GM12878 (cell line): ENCODE measurements at regions of chr22 and their contacts with region 1.

Region 1: DNA sequence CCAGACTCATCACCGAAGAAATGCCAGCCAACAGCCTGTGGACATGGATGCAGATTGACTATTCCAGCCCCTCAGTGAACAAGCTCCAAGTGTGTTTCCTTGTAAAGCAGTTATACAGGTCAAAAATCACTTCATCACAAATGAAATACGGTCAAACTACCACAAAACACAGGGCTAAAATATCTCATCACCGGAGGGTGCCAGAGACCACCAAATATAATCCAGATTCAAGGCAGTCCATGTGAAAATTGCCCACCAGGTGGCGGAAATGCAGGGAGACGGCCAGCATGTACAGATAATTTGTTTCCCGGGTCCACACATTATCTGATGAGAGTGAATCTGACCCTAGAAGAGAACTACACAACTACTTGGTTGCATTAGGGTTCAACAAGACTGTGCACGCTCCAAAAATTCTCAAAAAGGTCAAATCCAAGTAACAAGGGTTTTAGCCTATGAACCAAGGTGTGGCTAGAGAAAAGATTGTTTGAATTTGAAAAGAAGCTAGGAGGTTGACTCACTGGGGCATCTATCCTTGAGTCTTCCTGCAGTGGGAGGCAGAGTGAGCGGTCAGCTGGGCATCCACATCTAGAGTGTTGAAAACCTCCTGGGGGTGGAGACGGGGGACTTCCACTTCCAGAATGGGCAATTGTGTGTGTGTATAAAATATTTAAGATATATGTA is 71.7 kb downstream of the IGLL5 start:
- DNase-seq: peak; percentile 56
- ATAC-seq: peak; percentile 66
- H3K4me3 ChIP-seq: no peak overlapping the region
- H3K27ac ChIP-seq: no peak overlapping the region
- H3K4me1 ChIP-seq: peaks cover 11% of the 10 kb centered on the region
- H3K27me3 ChIP-seq: no peaks in the 10 kb centered on the region
- CTCF ChIP-seq: peak; percentile 81 to 100 (median 95); a peak in 5 of 6 replicates
- EP300 ChIP-seq: no peak
- POLR2A ChIP-seq: no peak
- RAD21 ChIP-seq: peak; percentile 100

Region 2: GRCh38 chr22:21972293-21972779 is 987.0 kb before region 1 on chr22:
- CTCF ChIA-PET with region 1: interaction called, 42 read pairs
- POLR2A ChIA-PET with region 1: no interaction called
- RAD21 ChIA-PET with region 1: interaction called, 9 read pairs
- SMC1A ChIA-PET with region 1: interaction called, 9 read pairs
- in situ Hi-C with region 1: no loop called
- intact Hi-C with region 1: loop called (anchors 5 kb)
- DNase-seq: no peak
- ATAC-seq: peak; percentile 92
- H3K4me3 ChIP-seq: no peak overlapping the region
- H3K27ac ChIP-seq: no peak overlapping the region
- H3K4me1 ChIP-seq: no peaks in the 10 kb centered on the region; the same call in 1 of the 2 replicates
- H3K27me3 ChIP-seq: no peaks in the 10 kb centered on the region
- CTCF ChIP-seq: peak; percentile 70 to 95 (median 94)
- EP300 ChIP-seq: no peak
- POLR2A ChIP-seq: no peak
- RAD21 ChIP-seq: peak; percentile 75

Region 3: DNA sequence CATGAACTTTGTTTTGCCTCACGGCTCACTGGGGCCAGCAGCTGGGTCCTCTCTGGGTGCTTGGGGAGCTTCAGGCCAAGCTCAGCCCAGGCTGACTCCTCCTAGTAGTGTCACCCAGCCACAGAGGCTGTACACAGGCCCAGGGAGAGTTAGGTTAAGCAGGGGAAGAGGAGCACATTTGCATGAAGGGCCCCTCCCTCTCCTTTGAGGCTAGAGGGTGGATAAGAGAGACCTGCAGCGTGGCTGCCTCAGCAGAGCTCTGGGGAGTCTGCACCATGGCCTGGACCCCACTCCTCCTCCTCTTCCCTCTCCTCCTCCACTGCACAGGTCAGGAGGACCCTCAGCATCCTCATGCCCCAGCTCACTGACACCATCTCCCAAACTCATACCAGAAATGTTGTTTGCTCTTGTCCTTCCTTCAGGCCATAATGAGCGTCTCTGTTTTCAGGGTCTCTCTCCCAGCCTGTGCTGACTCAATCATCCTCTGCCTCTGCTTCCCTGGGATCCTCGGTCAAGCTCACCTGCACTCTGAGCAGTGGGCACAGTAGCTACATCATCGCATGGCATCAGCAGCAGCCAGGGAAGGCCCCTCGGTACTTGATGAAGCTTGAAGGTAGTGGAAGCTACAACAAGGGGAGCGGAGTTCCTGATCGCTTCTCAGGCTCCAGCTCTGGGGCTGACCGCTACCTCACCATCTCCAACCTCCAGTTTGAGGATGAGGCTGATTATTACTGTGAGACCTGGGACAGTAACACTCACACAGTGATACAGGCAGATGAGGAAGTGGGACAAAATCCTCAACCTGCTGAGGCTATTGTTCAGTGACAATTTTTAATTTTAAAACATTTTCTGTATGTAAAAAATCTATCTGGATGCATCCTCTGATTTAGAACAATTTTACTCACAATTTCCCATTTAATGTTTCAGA is 797.1 kb before region 1 on chr22:
- CTCF ChIA-PET with region 1: interaction called, 75 read pairs
- POLR2A ChIA-PET with region 1: no interaction called
- RAD21 ChIA-PET with region 1: interaction called, 39 read pairs
- SMC1A ChIA-PET with region 1: interaction called, 38 read pairs
- in situ Hi-C with region 1: loop called (anchors 10 kb)
- intact Hi-C with region 1: no loop called
- DNase-seq: peak; percentile 42
- ATAC-seq: peak; percentile 92
- H3K4me3 ChIP-seq: peak overlapping the region; percentile 30; the same call in 1 of the 2 replicates
- H3K27ac ChIP-seq: no peak overlapping the region; the same call in 1 of the 2 replicates
- H3K4me1 ChIP-seq: peaks cover 19% of the 10 kb centered on the region
- H3K27me3 ChIP-seq: no peaks in the 10 kb centered on the region
- CTCF ChIP-seq: no peak
- EP300 ChIP-seq: no peak
- POLR2A ChIP-seq: peak; percentile 86
- RAD21 ChIP-seq: no peak

Region 4: GRCh38 chr22:22802339-22802970 is 156.8 kb before region 1 on chr22:
- CTCF ChIA-PET with region 1: interaction called, 323 read pairs
- POLR2A ChIA-PET with region 1: interaction called, 3 read pairs
- RAD21 ChIA-PET with region 1: interaction called, 184 read pairs
- SMC1A ChIA-PET with region 1: interaction called, 220 read pairs
- in situ Hi-C with region 1: loop called (anchors 5 kb)
- intact Hi-C with region 1: no loop called
- DNase-seq: no peak
- ATAC-seq: peak; percentile 54
- H3K4me3 ChIP-seq: no peak overlapping the region
- H3K27ac ChIP-seq: no peak overlapping the region
- H3K4me1 ChIP-seq: no peaks in the 10 kb centered on the region
- H3K27me3 ChIP-seq: no peaks in the 10 kb centered on the region
- CTCF ChIP-seq: peak; percentile 19 to 39 (median 34); a peak in 4 of 6 replicates
- EP300 ChIP-seq: no peak
- POLR2A ChIP-seq: no peak
- RAD21 ChIP-seq: no peak

Region 5: DNA sequence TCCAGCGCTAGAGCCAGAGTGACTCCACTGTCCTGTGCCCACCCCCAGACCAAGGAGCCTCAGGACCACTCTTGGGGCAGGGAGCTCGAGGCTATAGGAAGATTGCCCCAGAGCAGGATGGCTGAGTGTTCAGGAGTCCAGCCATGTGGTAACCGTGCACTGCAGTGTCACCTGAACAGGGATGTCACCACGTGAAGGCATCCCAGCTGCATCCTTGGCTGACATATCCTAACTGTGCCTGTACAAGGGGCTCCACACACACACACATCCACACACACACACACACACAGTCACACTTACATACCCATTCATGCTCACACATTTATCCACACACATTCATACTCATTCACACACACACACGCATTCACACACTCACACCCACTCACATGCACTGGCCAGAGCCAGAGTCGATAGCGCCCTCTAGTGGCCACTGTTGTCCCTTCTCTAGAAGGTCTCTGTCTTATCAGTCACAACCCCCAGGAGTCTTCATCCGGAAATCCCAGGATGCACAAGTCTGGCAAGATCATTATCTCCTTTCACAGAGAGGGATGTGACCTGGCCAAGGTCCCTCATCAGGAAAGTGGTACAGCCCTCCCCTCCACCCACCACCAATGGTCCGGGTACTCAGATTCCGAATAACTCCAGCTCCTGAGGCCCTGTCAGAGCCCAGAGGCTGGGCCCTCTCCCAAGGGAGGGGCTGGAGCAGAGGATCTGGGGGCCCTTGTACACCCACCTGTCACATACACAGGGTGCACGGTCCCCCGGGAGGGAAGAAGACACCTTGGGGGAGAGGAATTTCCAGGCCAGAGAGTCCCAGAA is 16.6 kb before region 1 on chr22:
- CTCF ChIA-PET with region 1: interaction called, 397 read pairs
- POLR2A ChIA-PET with region 1: interaction called, 21 read pairs
- RAD21 ChIA-PET with region 1: interaction called, 87 read pairs
- SMC1A ChIA-PET with region 1: interaction called, 93 read pairs
- in situ Hi-C with region 1: no loop called
- intact Hi-C with region 1: no loop called
- DNase-seq: peak; percentile 78
- ATAC-seq: peak; percentile 89
- H3K4me3 ChIP-seq: no peak overlapping the region
- H3K27ac ChIP-seq: peak overlapping the region; percentile 92
- H3K4me1 ChIP-seq: peaks cover 90% of the 10 kb centered on the region
- H3K27me3 ChIP-seq: no peaks in the 10 kb centered on the region
- CTCF ChIP-seq: peak; percentile 84 to 96 (median 87)
- EP300 ChIP-seq: 0 out of 4 replicates have a peak, but pooled peaks of 1 of the 2 experiments have one; percentile 61
- POLR2A ChIP-seq: no peak; the same call in 1 of the 2 replicates
- RAD21 ChIP-seq: peak; percentile 94

Region 6: GRCh38 chr22:23063539-23064380 is 104.5 kb after region 1 on chr22:
- CTCF ChIA-PET with region 1: interaction called, 13 read pairs
- POLR2A ChIA-PET with region 1: no interaction called
- RAD21 ChIA-PET with region 1: interaction called, 18 read pairs
- SMC1A ChIA-PET with region 1: interaction called, 4 read pairs
- in situ Hi-C with region 1: no loop called
- intact Hi-C with region 1: no loop called
- DNase-seq: no peak
- ATAC-seq: no peak
- H3K4me3 ChIP-seq: no peak overlapping the region
- H3K27ac ChIP-seq: no peak overlapping the region
- H3K4me1 ChIP-seq: no peaks in the 10 kb centered on the region
- H3K27me3 ChIP-seq: no peaks in the 10 kb centered on the region
- CTCF ChIP-seq: no peak
- EP300 ChIP-seq: no peak
- POLR2A ChIP-seq: no peak
- RAD21 ChIP-seq: no peak

Region 7: GRCh38 chr22:23144932-23145873 is 185.9 kb after region 1 on chr22 and contains the start of gene RAB36:
- CTCF ChIA-PET with region 1: interaction called, 86 read pairs
- POLR2A ChIA-PET with region 1: no interaction called
- RAD21 ChIA-PET with region 1: interaction called, 13 read pairs
- SMC1A ChIA-PET with region 1: interaction called, 28 read pairs
- in situ Hi-C with region 1: no loop called
- intact Hi-C with region 1: no loop called
- DNase-seq: peak; percentile 77
- ATAC-seq: peak; percentile 73
- H3K4me3 ChIP-seq: peak within 1 kb of the TSS; percentile 43
- H3K27ac ChIP-seq: no peak within 1 kb of the TSS
- H3K4me1 ChIP-seq: peaks cover 41% of the 10 kb centered on the region
- H3K27me3 ChIP-seq: no peaks in the 10 kb centered on the region
- CTCF ChIP-seq: no peak
- EP300 ChIP-seq: no peak
- POLR2A ChIP-seq: no peak
- RAD21 ChIP-seq: no peak
- polyA plus RNA-seq, gene RAB36: 0.45 to 0.46 TPM